Left colon (tissue), 2 donors: ENCODE measurements at regions of chr15 and their contacts with region 1.

Region 1: GRCh38 chr15:38683382-38684242 is 119.0 kb upstream of the RASGRP1 start:
- DNase-seq: peak in 1 of 2 donors; percentile 61
- ATAC-seq: peak; percentile 89

Region 2: GRCh38 chr15:38059665-38060064 is 623.9 kb before region 1 on chr15:
- intact Hi-C with region 1: no loop called
- DNase-seq: no peak
- ATAC-seq: no peak

Region 3: DNA sequence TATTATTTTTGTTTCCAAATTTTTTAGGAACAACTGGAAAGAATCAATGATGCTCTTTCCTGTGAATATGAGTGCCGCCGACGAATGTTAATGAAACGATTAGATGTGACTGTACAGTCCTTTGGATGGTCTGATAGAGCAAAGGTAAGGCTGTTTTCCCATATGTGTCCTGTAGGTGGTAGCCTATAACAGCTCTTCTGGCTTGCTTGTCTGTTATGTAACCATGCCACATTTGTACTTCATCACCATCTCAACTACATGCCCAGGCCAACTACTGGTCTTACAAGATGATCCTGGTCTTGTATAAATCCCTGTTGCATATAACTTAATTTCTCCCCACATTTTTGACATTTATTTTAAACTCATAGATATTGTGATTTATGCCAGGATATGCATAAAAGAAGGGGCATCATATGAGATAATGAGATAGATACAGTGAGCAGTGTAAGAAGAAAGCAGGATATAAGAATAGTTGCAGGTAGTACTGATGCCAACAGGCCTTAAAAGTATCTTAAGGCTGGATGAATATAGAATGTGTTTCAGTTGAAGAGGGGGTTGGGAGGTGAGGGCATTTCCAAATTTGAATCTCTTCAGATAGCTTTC is 209.4 kb before region 1 on chr15:
- intact Hi-C with region 1: loop called in 1 of 2 experiments (anchors 10 kb)
- DNase-seq: no peak
- ATAC-seq: peak; percentile 100

Region 4: DNA sequence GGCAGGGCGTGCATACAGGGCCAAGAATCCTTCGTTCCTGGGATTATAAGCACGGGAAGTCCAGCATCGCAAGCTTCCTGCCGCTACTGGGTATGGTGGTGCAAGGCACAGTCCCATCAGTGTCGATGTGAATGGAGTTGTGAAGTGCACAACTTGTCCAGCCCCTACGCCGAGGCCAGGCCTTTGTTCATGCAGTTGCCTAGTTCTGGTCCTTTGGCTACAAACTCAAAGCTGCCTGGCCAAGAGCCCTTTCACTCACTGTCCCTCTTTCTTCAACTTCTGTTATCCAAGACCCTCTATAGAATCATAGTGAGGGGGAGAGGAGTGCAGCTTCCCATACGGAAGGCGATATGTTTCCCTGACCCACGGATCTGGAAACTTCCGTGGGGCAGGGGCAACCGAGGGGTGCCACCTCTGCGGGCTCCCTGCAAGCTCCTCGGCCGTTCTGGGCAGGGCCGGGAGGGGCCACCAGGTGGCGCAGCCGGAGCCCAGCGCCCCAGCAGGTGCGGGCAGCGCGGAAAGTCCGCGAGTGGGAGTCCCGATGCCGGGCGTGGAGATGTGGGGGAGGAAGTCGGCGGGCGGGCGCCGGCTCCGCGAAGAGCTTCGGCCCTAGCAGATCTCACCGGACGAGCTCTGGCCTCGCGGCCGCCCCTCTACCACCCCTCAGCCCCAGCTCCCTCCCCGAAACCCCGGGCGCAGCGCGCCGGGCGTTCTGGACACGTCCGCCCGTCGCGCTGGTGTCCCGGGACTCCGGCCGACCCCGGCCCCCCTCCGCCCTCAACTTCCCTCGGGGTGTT is 119.7 kb before region 1 on chr15:
- intact Hi-C with region 1: loop called in 1 of 2 experiments (anchors 2 kb)
- DNase-seq: peak; percentile 51 to 84
- ATAC-seq: peak; percentile 90